A549 (cell line): ENCODE measurements at regions of chr7 and their contacts with region 1.

Region 1: DNA sequence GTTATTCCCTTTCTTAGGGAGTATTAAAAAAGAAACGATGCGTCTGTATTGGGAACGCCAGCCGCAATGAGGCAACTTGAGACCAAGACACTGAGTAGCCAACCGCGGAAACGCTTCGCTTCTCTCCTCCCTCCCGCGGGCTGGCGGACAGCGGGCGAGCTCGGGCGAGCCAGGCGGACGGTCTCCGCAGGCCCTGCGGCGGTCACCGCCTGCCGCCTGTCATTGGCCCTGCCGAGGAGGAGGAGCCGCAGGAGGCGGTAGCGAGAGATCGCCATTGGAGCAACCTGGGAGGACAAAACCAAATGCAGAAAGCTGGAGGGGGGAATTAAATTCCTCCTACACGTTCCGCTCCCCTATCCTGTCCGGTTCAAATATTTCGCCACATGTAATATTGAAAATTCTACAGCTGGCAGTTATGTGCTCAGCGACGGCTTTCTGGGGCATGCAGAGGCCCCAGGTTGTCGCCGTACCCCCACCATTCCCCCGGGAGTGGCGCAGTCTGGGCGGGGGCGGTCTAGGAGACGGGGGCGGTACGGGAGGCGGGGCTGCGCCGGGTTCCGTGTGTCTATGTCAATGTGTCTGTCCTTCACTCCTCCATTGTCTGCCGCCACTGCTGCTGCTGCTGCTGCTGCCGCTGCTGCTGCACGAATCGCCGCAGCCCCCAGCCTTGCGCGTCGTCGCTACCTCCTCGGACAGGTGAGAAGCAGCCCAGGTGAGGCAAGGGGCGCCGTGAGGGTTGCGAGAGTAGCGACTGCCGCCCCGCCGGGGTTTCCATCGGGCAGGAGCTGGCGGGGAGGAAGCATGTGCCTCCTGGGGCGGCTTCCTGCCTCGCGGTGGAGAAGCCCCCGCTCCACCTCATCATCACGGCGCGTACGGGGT is at the starts of genes ANKMY2 and BZW2:
- DNase-seq: peak; percentile 94 to 96
- ATAC-seq: peak; percentile 87 to 93
- H3K4me3 ChIP-seq: peak within 1 kb of the TSS; percentile 87
- H3K27ac ChIP-seq: peak within 1 kb of the TSS; percentile 96
- H3K4me1 ChIP-seq: peaks cover 44% of the 10 kb centered on the region
- CTCF ChIP-seq: no peak
- EP300 ChIP-seq: no peak
- POLR2A ChIP-seq: peak; percentile 100
- RAD21 ChIP-seq: 0 out of 5 replicates have a peak, but pooled peaks of 1 of the 2 experiments have one; percentile 24
- polyA plus RNA-seq, gene ANKMY2: 24.2 and 26.1 TPM in 2 replicates
- polyA plus RNA-seq, gene BZW2: 101 and 108 TPM in 2 replicates

Region 2: DNA sequence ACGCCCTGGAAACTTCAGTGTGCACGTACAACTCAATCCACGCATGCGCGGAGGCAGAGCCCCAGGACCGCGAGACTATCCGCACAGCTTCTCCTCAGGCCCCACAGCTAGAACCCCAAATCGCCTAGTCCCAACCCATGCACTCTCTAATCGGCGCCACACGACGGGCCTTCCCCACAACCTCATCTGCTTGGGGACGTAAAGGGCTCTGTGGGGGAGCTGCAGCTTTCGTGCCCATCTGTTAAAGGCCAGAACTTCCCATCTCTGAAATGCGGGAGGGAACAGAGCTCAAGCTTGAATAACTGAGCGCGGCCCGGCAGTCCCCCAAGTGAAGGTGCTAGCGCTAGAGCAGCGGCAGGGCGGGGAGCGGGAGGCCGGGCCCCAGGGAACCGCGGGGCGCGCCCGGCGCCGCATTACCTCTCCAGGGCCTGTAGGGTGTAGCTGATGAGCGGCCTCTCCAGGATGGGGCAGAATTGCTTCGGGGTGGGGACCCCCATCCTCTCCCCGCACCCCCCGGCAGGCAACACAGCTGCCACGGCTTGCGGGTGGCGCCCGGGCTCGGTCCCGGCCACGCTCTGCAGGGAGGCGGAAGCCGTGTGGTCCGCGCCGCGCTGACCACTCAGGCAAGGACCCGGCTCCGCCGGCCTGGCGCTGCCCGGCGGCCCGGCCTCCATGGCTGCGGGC is 225.0 kb before region 1 on chr7:
- CTCF ChIA-PET with region 1: no interaction called
- POLR2A ChIA-PET with region 1: interaction called, 11 read pairs
- DNase-seq: peak; percentile 76 to 94
- ATAC-seq: peak; percentile 96 to 97
- H3K4me3 ChIP-seq: peak overlapping the region; percentile 73
- H3K27ac ChIP-seq: peak overlapping the region; percentile 98
- H3K4me1 ChIP-seq: peaks cover 12% of the 10 kb centered on the region
- CTCF ChIP-seq: 0 out of 3 replicates have a peak, but pooled peaks have one; percentile 10
- EP300 ChIP-seq: no peak
- POLR2A ChIP-seq: peak; percentile 90
- RAD21 ChIP-seq: 0 out of 5 replicates have a peak, but pooled peaks of 1 of the 2 experiments have one; percentile 15

Region 3: GRCh38 chr7:16509829-16510228 is 136.0 kb before region 1 on chr7:
- CTCF ChIA-PET with region 1: no interaction called
- POLR2A ChIA-PET with region 1: no interaction called
- DNase-seq: peak in 1 of 2 experiments; percentile 19
- ATAC-seq: no peak; a peak in 1 of 6 replicates
- H3K4me3 ChIP-seq: no peak overlapping the region
- H3K27ac ChIP-seq: no peak overlapping the region
- H3K4me1 ChIP-seq: no peaks in the 10 kb centered on the region
- CTCF ChIP-seq: no peak
- EP300 ChIP-seq: no peak
- POLR2A ChIP-seq: no peak
- RAD21 ChIP-seq: no peak

Region 4: GRCh38 chr7:16668049-16668858 is 22.4 kb after region 1 on chr7:
- CTCF ChIA-PET with region 1: interaction called, 4 read pairs
- POLR2A ChIA-PET with region 1: interaction called, 48 read pairs
- DNase-seq: peak; percentile 88 to 96
- ATAC-seq: peak; percentile 98 to 99
- H3K4me3 ChIP-seq: no peak overlapping the region
- H3K27ac ChIP-seq: peak overlapping the region; percentile 83 to 85
- H3K4me1 ChIP-seq: peaks cover 29% of the 10 kb centered on the region
- CTCF ChIP-seq: no peak
- EP300 ChIP-seq: no peak; a peak in 1 of 5 replicates
- POLR2A ChIP-seq: no peak
- RAD21 ChIP-seq: peak; percentile 26; a peak in 3 of 5 replicates